ACHN (cell line): ENCODE measurements at regions of chr17 and their contacts with region 1.

Region 1: GRCh38 chr17:28865946-28866752 is 11.3 kb downstream of the ERAL1 start:
- DNase-seq: no peak

Region 2: GRCh38 chr17:28834420-28834819 is 31.7 kb before region 1 on chr17:
- in situ Hi-C with region 1: loop called (anchors 5 kb)
- DNase-seq: no peak